Breast epithelium (tissue), 4 donors: ENCODE measurements at regions of chr15 and their contacts with region 1.

Region 1: DNA sequence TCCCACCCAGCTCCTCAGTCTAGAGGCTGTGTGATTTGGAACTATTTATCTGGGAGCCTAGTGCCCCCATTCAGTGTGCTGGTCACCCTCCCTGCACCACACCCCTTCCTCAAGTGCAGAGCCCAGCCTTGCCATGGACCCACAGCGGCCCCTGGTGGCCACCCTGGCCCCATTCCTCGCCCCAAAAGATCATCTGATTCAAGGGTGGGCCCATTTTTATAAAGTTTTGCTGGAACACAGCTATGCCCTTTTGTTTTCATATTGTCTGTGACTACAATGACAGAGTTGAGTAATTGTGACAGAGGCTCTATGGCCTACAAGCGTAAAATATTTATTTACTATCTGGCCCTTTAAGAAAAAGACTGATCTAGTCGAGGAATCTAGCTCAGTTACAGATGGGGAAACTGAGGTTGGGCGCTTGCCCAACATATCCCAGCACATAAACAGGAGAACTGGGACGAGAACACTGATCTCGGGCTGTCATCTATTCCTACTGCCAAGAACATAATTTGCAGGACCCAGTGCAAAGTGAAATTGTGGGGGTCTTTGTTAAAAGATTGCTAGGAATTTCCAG is 1.8 kb downstream of the FES start:
- DNase-seq: peak in 1 of 2 donors; percentile 71
- H3K4me3 ChIP-seq: peak overlapping the region; percentile 52 to 82 (median 62)
- H3K27ac ChIP-seq: peak overlapping the region; percentile 92 to 98
- H3K4me1 ChIP-seq: peaks cover 11% of the 10 kb centered on the region in 2 donors
- H3K27me3 ChIP-seq: no peaks in the 10 kb centered on the region
- CTCF ChIP-seq: peak; percentile 82 to 98 (median 96)
- POLR2A ChIP-seq: no peak

Region 2: DNA sequence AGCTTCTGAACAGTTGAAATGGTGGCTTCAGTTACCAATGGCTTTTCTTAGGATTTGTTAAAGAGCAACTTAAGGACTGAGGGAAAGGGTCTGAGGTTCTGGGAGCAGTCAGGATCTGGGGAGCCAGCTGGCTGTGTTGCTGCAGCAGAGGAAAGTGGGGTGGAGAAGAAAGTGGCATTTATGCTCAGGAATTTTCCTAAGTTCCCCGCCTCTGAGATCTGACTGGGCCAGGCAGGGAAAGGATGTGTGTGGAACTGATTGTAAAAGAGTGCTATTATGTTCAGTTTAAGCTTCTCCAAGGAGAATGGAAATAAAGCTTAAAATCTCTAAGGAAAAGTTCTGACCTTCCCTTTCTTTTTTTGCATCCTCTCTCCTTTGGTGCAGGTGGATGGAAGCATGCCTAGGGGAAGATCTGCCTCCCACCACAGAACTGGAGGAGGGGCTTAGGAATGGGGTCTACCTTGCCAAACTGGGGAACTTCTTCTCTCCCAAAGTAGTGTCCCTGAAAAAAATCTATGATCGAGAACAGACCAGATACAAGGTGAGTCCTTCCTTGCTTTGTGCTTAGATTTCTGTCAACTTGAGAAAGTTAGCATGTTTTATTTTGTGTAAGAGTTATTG is 460.3 kb before region 1 on chr15:
- intact Hi-C with region 1: loop called (anchors 2 kb)
- DNase-seq: no peak
- H3K4me3 ChIP-seq: no peak overlapping the region
- H3K27ac ChIP-seq: no peak overlapping the region
- H3K4me1 ChIP-seq: peaks cover 4 to 19% of the 10 kb centered on the region in 2 donors
- H3K27me3 ChIP-seq: no peaks in the 10 kb centered on the region
- CTCF ChIP-seq: no peak
- POLR2A ChIP-seq: no peak

Region 3: DNA sequence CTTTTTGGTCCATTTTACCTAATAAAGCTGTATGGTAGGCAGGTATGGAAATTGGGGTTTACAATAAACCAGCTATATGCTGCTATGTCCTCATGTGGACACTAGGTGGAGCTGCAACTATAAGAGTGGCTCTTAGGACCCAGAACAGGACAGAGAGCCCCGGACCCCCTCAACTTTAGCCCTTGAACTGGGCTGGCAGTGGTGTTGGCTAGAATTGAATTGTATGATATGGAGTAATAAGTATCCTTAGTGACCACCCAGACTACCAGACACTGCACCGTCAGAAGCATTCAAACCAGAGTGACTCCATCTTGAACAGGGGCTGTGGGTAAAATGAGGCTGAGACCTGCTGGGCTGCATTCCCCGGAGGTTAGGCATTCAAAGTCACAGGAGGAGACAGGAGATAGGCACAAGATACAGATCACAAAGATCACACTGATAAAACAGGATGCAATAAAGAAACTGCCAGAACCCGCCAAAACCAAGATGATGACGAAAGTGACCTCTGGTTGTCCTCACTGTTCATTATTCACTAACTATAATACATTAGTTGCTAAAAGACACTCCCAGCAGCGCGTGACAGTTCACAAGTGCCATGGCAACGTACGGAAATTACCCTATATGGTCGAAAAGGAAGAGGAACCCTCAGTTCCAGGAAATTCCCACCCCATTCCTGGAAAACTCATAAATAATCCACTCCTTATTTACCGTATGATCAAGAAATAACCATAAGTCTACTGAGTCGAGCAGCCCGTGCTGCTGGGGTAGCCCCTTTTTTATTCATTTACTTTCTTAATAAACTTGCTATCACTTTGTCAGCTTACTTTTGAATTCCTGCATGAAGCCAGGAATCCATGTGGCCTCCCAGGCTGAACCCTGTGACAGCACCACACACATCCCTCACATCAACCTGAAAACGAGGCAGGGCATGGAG is 237.7 kb before region 1 on chr15:
- intact Hi-C with region 1: loop called (anchors 5 kb)
- DNase-seq: peak in 1 of 2 donors; percentile 66
- H3K4me3 ChIP-seq: no peak overlapping the region
- H3K27ac ChIP-seq: peak overlapping the region; percentile 2 to 74
- H3K4me1 ChIP-seq: no peaks in the 10 kb centered on the region
- H3K27me3 ChIP-seq: no peaks in the 10 kb centered on the region
- CTCF ChIP-seq: peak; percentile 67 to 93 (median 91)
- POLR2A ChIP-seq: no peak

Region 4: DNA sequence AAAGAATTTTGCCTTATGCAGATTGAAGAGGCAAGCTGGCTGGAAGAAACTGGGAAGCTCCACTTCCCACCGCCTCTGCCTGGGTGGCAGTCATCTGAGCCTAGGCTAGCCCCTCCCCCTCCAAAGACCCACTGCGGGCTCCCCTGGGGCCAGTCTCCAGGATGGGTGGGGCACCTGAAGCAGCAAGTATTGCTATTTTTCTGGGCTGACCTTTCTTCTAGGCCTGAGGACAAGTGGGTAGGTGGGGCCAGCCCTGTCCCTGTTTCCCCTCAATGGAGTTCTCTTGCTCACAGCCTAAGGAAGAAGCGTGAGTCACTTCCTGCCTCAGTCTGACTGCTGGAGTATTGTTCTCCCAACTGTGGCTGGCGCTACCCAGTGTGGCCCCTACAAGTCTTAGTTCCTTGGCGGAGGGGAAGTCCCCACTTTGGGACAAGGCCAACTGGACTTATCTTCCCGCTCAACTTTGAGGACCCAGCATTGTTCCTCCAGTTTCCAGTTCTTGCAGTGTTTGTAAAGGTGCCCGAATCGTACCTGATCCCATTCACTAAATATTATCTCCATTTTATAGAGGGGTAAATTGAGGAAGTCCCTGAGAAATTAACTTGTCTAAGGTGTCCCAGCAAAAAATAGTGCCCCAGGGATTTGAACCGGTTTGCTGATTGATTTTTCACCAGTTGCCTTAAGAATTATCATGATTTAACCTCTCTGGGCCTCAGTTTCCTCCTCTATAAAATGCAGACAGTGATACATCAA is 16.4 kb before region 1 on chr15:
- intact Hi-C with region 1: no loop called
- DNase-seq: no peak
- H3K4me3 ChIP-seq: peak overlapping the region in 1 of 3 donors; percentile 96
- H3K27ac ChIP-seq: peak overlapping the region; percentile 90 to 97
- H3K4me1 ChIP-seq: peaks cover 4 to 31% of the 10 kb centered on the region in 2 donors
- H3K27me3 ChIP-seq: no peaks in the 10 kb centered on the region
- CTCF ChIP-seq: no peak
- POLR2A ChIP-seq: no peak

Region 5: GRCh38 chr15:90901175-90902039 is 15.3 kb after region 1 on chr15:
- intact Hi-C with region 1: loop called (anchors 1 kb)
- DNase-seq: no peak
- H3K4me3 ChIP-seq: peak overlapping the region in 2 of 3 donors; percentile 84 to 86
- H3K27ac ChIP-seq: peak overlapping the region; percentile 88 to 93
- H3K4me1 ChIP-seq: peaks cover 0 to 11% of the 10 kb centered on the region in 2 donors
- H3K27me3 ChIP-seq: no peaks in the 10 kb centered on the region
- CTCF ChIP-seq: no peak
- POLR2A ChIP-seq: no peak